ENCODE measurements at regions of chrX and their contacts with region 1.

Region 1: DNA sequence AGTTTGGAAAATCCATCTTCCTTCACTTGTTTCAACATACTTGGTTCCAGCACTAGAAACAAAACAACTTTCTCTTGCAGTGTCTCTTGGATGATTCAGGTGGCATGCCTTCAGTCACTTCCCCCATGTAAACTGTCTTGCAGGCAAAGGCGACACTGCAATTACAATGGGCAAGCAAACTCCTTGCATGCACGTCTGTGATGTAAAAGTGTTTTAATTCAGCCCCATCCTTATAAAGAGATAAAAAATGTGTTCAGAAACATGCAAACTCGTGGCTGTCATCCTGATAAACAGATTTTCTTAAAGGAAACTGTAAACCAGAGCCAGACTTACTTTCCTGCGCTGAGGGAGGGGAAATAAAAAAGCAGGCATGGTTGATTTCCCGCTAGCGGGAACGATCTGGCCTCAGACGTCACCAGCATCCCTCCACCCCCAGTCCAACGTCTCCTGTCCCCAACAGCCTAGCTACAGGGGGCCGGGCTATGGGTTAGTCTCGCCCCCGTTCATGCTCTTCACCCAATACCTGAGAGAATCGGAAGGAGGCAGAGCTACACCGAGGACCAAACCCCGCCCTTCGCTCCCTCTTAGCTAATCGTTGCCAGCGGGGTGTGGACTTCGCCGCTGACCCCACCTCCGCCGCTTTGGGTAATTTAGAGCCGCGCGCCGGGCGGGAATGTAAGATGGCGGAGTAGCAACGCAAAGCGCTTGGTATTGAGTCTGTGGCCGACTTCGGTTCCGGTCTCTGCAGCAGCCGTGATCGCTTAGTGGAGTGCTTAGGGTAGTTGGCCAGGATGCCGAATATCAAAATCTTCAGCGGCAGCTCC is at the start of gene PRPS1:
- DNase-seq: peak; percentile 93 to 97
- H3K4me3 ChIP-seq: peak within 1 kb of the TSS; percentile 74
- H3K27ac ChIP-seq: peak within 1 kb of the TSS; percentile 57
- H3K4me1 ChIP-seq: peaks cover 40% of the 10 kb centered on the region
- H3K27me3 ChIP-seq: no peaks in the 10 kb centered on the region
- CTCF ChIP-seq: no peak
- total RNA-seq, gene PRPS1: 67.4 and 67.9 TPM in 2 replicates

Region 2: DNA sequence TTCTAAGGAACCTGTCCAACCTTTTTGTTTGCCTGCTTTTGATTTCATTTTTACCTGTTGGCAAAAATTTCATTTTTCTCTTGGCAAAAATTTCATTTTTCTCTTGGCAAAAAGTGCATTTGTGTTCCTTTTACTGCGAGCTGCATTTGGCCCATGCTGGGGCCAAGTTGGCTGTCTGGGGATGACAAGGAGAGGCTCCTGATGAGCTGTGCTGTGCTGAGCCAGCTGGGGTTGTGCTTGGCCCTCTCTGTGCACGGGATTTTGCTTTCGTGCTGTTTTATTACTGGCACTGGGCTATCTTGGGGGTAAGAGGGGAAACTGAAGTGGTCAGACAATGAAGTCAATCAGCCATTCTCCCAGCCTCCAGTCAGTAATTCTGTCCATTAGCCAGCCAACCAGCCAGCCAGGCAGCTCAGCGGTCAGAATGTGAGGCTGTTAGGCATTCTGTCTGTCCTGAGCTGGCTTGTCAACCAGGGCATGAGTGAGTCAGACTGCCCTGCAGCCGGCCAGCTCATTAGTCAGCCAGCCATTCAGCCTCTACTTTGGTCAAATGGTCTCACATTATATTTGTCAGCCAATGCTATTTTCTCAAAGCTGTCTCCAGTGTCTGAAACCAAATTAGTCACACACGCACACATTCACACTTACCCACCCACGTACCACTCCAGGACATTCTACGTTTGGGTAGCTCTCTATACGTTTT is 56.6 kb before region 1 on chrX:
- CTCF ChIA-PET with region 1: interaction called, 4 read pairs
- POLR2A ChIA-PET with region 1: no interaction called
- intact Hi-C with region 1: loop called (anchors 5 kb)
- DNase-seq: peak; percentile 65 to 91
- H3K4me3 ChIP-seq: no peak overlapping the region
- H3K27ac ChIP-seq: peak overlapping the region; percentile 79
- H3K4me1 ChIP-seq: peaks cover 45% of the 10 kb centered on the region
- H3K27me3 ChIP-seq: no peaks in the 10 kb centered on the region
- CTCF ChIP-seq: no peak

Region 3: DNA sequence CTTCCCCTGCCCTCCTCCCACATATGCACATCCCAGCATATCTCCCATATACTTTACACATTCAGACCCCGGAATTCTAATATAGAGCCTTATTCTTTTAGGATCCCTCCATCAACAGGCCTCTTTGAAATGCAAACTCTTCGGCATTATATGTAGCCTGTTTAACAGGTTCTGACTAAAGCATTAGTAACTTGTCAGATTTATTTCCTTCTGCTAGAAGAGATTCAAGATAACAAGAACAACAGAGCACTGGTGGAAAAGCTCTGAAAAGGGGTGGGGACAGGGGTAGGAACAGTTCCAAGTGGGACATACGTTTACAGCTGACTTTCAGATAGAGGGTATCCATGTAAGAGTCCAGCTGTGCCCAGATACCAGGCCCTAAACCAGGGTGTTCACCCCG is 31.4 kb before region 1 on chrX:
- CTCF ChIA-PET with region 1: no interaction called
- POLR2A ChIA-PET with region 1: interaction called, 3 read pairs
- intact Hi-C with region 1: loop called (anchors 2 kb)
- DNase-seq: peak; percentile 29 to 91
- H3K4me3 ChIP-seq: no peak overlapping the region
- H3K27ac ChIP-seq: peak overlapping the region; percentile 18; the same call in 1 of the 2 replicates
- H3K4me1 ChIP-seq: peaks cover 23% of the 10 kb centered on the region
- H3K27me3 ChIP-seq: no peaks in the 10 kb centered on the region
- CTCF ChIP-seq: no peak

Region 4: DNA sequence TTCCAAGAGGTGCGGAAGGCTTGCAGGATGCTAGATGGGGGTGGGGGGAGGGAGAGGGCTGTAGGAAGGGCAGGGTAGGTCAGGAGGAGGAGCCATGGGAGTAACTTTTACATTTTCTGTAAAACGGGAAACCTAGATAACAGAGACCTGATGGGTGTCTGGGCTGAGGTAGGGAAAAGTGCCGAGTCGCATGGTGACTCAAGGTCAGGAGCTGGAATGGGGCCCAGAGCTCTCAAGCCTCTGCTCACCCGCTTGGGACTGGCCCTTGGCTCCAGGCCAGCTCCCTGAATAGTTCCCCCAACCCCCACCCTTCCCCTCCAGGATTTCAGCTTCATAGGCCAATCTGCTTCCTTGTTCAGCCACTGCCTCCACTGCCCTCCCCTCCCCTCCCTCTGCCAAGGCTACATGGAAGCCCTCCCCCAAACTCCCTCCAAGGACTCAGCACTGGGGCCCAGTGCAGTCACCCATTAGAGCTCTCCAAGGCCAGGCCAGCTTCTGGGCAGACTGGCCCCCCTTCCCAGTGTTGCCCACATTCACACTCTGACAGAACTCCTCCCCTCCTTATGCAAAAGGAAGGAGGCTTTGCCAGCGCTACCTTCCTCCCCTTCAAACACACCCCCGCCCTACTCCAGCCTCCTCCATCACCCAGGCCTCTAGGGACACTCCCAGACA is 103.9 kb after region 1 on chrX:
- CTCF ChIA-PET with region 1: interaction called, 3 read pairs
- POLR2A ChIA-PET with region 1: interaction called, 45 read pairs
- intact Hi-C with region 1: no loop called
- DNase-seq: peak; percentile 93 to 95
- H3K4me3 ChIP-seq: no peak overlapping the region
- H3K27ac ChIP-seq: peak overlapping the region; percentile 63
- H3K4me1 ChIP-seq: peaks cover 81% of the 10 kb centered on the region
- H3K27me3 ChIP-seq: no peaks in the 10 kb centered on the region
- CTCF ChIP-seq: no peak

Measured in PC-9 (cell line).